AG04449 (cell line): ENCODE measurements at regions of chrX and their contacts with region 1.

Region 1: DNA sequence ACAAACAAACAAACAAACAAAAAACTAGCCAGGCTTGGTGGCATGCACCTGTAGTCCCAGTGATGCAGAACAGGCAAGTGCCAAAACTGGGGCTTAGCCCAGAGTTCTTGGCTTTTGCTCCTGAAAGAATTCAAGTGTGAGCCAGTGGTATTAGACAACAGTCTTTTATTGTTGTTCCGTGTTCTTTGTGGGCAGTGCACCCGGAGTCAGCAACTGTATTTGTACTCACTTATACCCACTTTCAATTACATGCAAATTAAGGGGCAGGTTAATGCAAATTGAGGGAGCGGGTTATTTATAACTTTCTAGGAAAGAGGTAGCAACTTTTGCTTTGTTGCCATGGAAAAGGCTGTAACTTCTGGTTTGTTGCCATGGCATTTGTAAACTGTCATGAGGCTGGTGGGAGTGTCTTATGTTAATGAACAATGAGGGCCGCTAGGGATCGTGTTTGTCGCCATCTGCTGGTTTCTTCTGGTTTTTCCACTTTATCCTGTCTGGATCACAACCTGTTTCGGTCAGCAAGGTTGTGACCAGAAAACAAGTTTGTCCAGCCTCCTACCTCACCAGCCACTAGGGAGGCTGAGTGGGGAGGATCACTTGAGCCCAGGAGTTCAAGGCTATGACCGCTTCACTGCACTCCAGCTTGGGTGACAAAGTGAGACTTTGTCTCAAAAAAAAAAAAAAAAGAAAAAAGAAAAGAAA is 88.8 kb upstream of the ESX1 start:
- DNase-seq: no peak
- H3K4me3 ChIP-seq: no peak overlapping the region
- CTCF ChIP-seq: peak; percentile 41

Region 2: GRCh38 chrX:104270920-104271512 is 72.6 kb before region 1 on chrX:
- CTCF ChIA-PET with region 1: no interaction called
- POLR2A ChIA-PET with region 1: no interaction called
- DNase-seq: no peak
- H3K4me3 ChIP-seq: peak overlapping the region; percentile 31
- CTCF ChIP-seq: peak; percentile 51

Region 3: DNA sequence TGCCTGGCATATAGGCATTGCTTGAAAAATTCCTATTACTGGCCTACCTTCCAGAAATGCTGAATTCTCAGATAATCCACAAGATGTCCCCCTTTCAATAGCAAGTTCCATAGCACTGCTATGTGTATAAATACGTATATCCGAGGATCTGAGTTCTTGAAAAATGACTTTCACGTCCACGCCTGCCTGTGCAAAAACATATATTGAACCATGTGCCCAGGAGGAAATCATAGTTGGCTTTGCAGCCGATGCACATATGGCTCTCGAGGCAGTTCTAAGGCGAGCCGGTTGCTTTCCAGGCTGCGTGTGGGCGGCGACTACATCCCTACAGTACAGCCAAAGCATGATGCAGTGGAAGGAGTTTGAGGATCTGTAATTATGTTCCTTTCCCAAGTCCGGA is 33.5 kb before region 1 on chrX:
- CTCF ChIA-PET with region 1: interaction called, 51 read pairs
- POLR2A ChIA-PET with region 1: no interaction called
- DNase-seq: no peak
- H3K4me3 ChIP-seq: peak overlapping the region; percentile 48
- CTCF ChIP-seq: peak; percentile 25